HEK293T (cell line): ENCODE measurements at regions of chr16 and their contacts with region 1.

Region 1: DNA sequence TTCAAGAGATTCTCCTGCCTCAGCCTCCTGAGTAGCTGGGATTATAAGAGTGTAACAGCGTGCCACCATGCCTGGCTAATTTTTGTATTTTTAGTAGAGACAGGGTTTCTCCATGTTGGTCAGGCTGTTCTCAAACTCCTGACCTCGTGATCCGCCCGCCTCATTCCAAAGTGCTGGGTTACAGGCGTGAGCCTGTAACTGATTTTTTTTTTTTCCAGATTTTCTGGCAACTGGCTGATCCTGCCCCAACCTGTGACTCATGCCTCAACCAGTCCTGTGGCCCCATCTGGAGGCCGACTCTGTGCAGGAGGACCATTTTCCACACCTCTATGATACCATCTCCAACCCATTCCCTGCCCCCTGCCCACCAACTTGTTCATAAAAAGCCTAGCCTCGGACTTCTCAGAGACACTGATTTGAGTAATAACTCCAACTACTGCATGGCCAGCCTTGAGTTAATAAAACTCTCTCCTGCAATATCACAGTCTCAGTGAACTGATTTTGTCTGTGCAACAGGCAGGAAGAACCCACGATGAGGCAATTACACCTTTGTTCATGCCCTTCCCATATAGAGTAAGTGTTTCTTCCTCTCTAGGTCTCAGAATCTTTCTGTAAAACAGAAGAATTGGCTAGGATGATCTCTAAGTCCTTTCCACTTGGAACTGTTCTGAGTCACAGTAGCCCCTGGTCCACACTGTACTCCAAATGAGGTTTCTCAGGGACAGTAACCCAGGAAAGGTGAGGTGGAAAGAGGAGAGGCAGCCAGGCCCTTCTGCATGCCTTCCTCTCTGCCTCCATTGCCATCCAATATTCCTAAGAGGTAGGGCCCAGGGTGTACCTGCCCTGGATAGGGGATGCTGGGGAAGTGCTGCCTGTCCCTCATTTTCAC is 8.8 kb upstream of the CNOT1 start:
- DNase-seq: peak; percentile 26

Region 2: DNA sequence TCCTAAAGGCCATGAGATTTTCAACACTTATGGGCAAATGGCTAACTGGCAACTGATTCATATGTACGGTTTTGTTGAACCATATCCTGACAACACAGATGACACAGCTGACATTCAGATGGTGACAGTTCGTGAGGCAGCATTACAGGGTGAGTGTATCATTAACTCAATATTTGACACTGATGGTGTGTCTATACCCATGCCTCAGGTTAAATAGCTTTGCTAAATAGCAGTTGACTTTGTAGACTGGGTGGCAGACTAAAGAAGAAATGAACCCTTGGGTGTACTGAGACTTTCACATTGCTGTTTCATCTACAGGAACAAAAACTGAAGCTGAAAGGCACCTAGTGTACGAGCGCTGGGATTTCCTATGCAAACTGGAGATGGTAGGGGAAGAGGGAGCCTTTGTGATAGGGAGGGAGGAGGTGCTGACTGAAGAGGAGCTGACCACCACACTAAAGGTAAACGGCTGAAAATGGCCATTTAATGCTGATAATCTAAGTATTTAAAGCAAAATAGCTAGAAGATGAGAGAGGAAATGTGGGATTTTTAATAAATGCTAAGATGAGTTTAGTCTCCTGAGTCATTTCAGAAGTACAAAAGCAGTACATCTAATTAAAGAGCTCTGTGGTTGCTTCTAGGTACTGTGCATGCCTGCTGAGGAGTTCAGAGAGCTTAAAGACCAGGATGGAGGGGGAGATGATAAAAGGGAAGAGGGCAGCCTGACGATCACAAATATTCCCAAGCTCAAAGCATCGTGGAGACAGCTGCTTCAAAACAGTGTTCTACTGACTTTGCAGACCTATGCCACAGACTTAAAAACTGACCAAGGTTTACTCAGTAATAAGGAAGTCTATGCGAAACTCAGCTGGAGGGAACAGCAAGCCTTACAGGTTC is 120.1 kb before region 1 on chr16:
- CTCF ChIA-PET with region 1: interaction called, 13 read pairs
- POLR2A ChIA-PET with region 1: no interaction called
- DNase-seq: no peak